Endothelial cell of umbilical vein (primary cell): ENCODE measurements at regions of chr1 and their contacts with region 1.

Region 1: DNA sequence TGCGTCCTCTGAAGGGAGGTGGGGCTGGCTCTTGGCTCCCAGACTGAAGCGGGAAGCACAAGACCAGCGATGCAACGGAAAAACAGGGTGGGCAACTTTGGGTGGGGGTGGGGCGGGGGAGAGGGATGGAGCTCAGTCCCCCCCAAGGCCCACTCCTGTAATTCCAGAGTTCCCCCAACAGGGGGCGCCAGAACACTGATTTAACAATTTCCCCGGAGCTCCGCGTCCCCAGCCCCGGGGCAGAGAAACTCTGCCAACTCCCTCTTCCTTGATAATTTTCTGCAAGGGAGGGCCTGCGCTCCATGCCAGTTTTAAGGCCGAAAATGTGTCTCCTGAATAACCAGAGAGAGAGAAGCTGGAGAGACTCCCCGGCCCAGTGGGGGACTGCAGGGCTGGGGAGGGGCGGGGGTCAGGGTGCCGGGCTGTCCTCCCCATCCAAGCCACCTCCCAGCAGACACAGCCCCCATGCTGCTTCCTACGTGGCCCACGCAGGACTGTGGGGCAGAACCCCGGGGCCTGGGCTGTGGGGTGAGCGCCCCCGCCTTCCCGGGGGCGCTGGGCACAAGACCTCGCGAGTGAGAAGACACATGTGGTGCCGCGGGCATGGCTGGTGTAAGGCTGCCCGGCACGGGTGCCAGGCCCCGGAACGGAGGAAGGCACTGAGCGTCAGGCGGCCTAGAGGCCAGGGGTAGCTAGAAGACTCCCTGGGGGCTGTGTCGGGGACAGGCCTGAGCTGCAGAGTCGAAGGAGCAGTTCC is 51.4 kb downstream of the KIF21B start:
- DNase-seq: peak; percentile 39
- H3K4me3 ChIP-seq: no peak overlapping the region
- H3K27ac ChIP-seq: no peak overlapping the region
- H3K4me1 ChIP-seq: no peaks in the 10 kb centered on the region
- H3K27me3 ChIP-seq: no peaks in the 10 kb centered on the region
- CTCF ChIP-seq: peak; percentile 52 to 72
- POLR2A ChIP-seq: no peak

Region 2: GRCh38 chr1:200550367-200550766 is 421.8 kb before region 1 on chr1:
- CTCF ChIA-PET with region 1: no interaction called
- POLR2A ChIA-PET with region 1: no interaction called
- dilution Hi-C with region 1: no loop called
- intact Hi-C with region 1: no loop called
- DNase-seq: no peak
- H3K4me3 ChIP-seq: no peak overlapping the region
- H3K27ac ChIP-seq: no peak overlapping the region
- H3K4me1 ChIP-seq: no peaks in the 10 kb centered on the region
- H3K27me3 ChIP-seq: no peaks in the 10 kb centered on the region
- CTCF ChIP-seq: no peak
- POLR2A ChIP-seq: no peak

Region 3: DNA sequence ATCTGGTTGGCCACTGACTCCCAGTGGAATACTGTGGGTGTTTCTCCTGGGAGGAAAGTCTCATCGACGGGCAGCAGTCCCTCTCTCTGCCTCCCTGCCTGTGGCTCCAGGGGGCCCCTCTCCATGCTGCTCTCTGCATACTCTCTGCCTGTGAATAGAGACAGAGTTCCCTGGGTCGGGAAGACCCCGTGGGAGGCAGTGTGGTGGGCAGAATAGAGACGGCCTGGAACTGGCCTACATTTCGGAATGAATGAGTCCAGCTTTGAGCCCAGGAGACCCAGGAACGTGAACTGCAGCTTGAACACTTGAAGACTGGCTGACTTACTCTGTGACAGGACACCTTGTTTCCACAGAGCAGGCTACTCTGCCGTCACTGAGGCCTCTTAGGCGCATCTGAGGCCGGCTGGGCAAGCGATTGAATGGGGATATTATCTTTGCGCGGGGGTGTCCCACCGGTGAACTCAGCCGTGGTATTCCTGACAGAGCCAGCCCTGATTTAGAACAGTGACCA is 12.7 kb before region 1 on chr1:
- CTCF ChIA-PET with region 1: interaction called, 12 read pairs
- POLR2A ChIA-PET with region 1: no interaction called
- dilution Hi-C with region 1: no loop called
- intact Hi-C with region 1: no loop called
- DNase-seq: no peak
- H3K4me3 ChIP-seq: no peak overlapping the region
- H3K27ac ChIP-seq: no peak overlapping the region
- H3K4me1 ChIP-seq: no peaks in the 10 kb centered on the region
- H3K27me3 ChIP-seq: no peaks in the 10 kb centered on the region
- CTCF ChIP-seq: no peak
- POLR2A ChIP-seq: no peak

Region 4: GRCh38 chr1:201016211-201016651 is 44.1 kb after region 1 on chr1:
- CTCF ChIA-PET with region 1: interaction called, 94 read pairs
- POLR2A ChIA-PET with region 1: no interaction called
- dilution Hi-C with region 1: no loop called
- intact Hi-C with region 1: no loop called
- DNase-seq: peak; percentile 34
- H3K4me3 ChIP-seq: no peak overlapping the region
- H3K27ac ChIP-seq: peak overlapping the region; percentile 4
- H3K4me1 ChIP-seq: peaks cover 36% of the 10 kb centered on the region
- H3K27me3 ChIP-seq: no peaks in the 10 kb centered on the region
- CTCF ChIP-seq: no peak
- POLR2A ChIP-seq: no peak

Region 5: GRCh38 chr1:201072158-201072557 is 100.0 kb after region 1 on chr1:
- CTCF ChIA-PET with region 1: interaction called, 13 read pairs
- POLR2A ChIA-PET with region 1: no interaction called
- dilution Hi-C with region 1: no loop called
- intact Hi-C with region 1: no loop called
- DNase-seq: no peak
- H3K4me3 ChIP-seq: no peak overlapping the region
- H3K27ac ChIP-seq: no peak overlapping the region
- H3K4me1 ChIP-seq: no peaks in the 10 kb centered on the region
- H3K27me3 ChIP-seq: peaks cover 11% of the 10 kb centered on the region in 2 experiments
- CTCF ChIP-seq: no peak
- POLR2A ChIP-seq: no peak

Region 6: DNA sequence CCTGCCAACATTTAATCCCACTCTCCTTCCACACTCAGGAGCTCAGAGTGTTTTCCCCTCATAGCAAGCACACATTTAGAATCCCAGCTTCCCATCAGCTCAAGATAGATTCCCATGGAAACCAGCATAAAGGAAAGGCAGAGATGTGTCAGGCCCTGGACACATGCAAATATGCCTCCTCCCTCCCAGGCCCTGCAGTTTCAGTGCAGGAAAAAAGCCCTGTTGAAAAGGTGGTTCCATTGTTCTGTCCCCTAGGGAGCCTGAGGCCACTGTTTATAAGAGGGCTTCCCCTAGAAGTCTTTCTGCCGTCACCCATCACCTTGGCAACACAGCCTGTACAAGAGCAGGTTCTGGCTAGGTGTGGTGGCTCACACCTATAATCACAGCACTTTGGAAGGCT is 136.5 kb after region 1 on chr1:
- CTCF ChIA-PET with region 1: interaction called, 70 read pairs
- POLR2A ChIA-PET with region 1: no interaction called
- dilution Hi-C with region 1: no loop called
- intact Hi-C with region 1: no loop called
- DNase-seq: no peak
- H3K4me3 ChIP-seq: no peak overlapping the region
- H3K27ac ChIP-seq: no peak overlapping the region
- H3K4me1 ChIP-seq: no peaks in the 10 kb centered on the region
- H3K27me3 ChIP-seq: peaks cover 8 to 13% of the 10 kb centered on the region in 2 experiments
- CTCF ChIP-seq: no peak
- POLR2A ChIP-seq: no peak

Region 7: DNA sequence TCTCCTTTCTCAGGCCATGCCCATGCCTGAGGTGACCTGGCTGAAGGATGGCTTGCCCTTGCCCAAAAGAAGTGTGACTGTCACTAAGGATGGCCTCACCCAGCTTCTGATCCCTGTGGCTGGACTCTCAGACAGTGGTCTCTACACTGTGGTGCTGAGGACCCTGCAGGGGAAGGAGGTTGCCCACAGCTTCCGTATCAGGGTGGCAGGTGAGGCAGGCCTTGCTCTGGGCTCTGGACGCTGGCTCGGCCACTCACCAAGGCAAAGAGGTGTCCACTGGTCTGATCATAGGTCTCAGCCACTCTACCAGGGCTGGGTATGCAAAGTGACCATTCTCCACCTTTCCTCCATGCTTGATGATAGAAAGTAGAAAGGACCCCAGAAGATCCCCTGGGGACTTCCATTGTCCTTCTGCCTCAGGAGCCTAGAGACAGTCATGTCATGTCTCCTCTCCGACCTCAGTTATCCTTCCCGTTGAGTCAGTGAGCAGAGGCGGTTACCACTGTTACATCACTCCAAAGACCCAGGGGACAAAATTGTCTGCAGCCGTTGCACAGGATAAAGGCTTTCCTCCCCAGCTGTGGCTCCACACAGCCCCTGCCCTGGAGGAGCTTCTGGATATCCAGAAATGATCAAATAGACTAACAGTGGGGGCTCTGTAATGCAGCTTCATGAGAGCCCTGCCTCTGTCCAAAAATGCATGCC is 252.7 kb after region 1 on chr1:
- CTCF ChIA-PET with region 1: interaction called, 17 read pairs
- POLR2A ChIA-PET with region 1: no interaction called
- dilution Hi-C with region 1: no loop called
- intact Hi-C with region 1: loop called (anchors 1 kb)
- DNase-seq: no peak
- H3K4me3 ChIP-seq: no peak overlapping the region
- H3K27ac ChIP-seq: no peak overlapping the region
- H3K4me1 ChIP-seq: no peaks in the 10 kb centered on the region
- H3K27me3 ChIP-seq: peaks cover 0 to 2% of the 10 kb centered on the region in 2 experiments
- CTCF ChIP-seq: no peak
- POLR2A ChIP-seq: no peak